ENCODE measurements at regions of chr1 and their contacts with region 1.

Region 1: DNA sequence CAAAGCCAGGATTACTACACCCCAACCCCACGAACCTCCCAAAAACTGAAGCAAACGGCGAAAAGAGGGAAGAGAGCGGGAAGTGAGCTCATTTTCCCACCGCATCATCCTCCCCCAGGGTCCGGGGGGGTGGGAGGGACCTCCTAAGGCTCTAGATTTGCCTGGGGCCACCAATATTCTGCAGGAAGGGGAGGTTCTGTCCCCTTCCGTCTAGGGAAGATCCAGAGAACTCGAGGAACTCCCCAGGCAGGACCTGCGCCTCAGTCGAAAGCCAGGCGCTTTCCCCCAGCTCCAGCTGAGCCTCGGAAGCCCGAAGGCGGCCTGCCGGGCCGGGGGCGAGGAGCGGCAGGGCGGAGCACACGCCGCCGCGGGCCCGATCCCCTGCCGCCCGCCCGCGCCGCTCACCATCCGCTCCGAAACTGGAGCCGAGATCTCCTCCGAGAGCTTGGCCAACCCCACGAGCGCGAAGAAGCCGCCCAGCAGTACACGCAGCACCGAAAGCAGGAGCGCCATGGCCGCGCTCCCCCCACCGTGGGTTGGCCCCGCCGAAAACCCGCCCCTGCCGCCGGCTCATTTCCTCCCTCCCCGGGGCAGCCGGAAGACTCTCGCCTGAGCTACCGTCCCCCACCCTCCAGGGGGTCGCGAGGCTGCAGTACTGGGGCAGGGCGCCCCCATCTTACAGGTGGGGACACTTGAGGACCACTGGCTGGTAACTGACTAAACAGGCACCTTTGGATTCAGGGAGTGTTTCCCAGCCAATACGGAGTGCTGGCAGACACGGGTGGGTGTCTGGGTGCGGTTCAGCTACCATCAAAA is at the start of gene TMEM35B:
- H3K4me3 ChIP-seq: peak within 1 kb of the TSS; percentile 74
- H3K27ac ChIP-seq: peak within 1 kb of the TSS; percentile 81; the same call in 1 of the 2 replicates
- H3K4me1 ChIP-seq: peaks cover 8% of the 10 kb centered on the region
- CTCF ChIP-seq: peak; percentile 82

Region 2: GRCh38 chr1:34859446-34860200 is 125.4 kb before region 1 on chr1 and contains the start of gene SMIM12:
- CTCF ChIA-PET with region 1: interaction called, 3 read pairs
- POLR2A ChIA-PET with region 1: interaction called, 10 read pairs
- H3K4me3 ChIP-seq: peak within 1 kb of the TSS; percentile 73
- H3K27ac ChIP-seq: peak within 1 kb of the TSS; percentile 24; the same call in 1 of the 2 replicates
- H3K4me1 ChIP-seq: no peaks in the 10 kb centered on the region
- CTCF ChIP-seq: peak; percentile 90

Region 3: GRCh38 chr1:35030756-35031446 is 45.9 kb after region 1 on chr1:
- CTCF ChIA-PET with region 1: no interaction called
- POLR2A ChIA-PET with region 1: interaction called, 13 read pairs
- H3K4me3 ChIP-seq: peak overlapping the region; percentile 87
- H3K27ac ChIP-seq: peak overlapping the region; percentile 75
- H3K4me1 ChIP-seq: no peaks in the 10 kb centered on the region
- CTCF ChIP-seq: no peak

Region 4: GRCh38 chr1:35079003-35079930 is 94.3 kb after region 1 on chr1 and contains the start of gene ZMYM1:
- CTCF ChIA-PET with region 1: no interaction called
- POLR2A ChIA-PET with region 1: interaction called, 15 read pairs
- H3K4me3 ChIP-seq: peak within 1 kb of the TSS; percentile 79
- H3K27ac ChIP-seq: peak within 1 kb of the TSS; percentile 89
- H3K4me1 ChIP-seq: no peaks in the 10 kb centered on the region
- CTCF ChIP-seq: no peak

Measured in HEK293 (cell line).